AG04450 (cell line): ENCODE measurements at regions of chr20 and their contacts with region 1.

Region 1: GRCh38 chr20:19974626-19975435 is 42.3 kb upstream of the NAA20 start:
- DNase-seq: peak; percentile 92
- H3K4me3 ChIP-seq: peak overlapping the region; percentile 99
- H3K27ac ChIP-seq: peak overlapping the region; percentile 100
- H3K27me3 ChIP-seq: no peaks in the 10 kb centered on the region
- CTCF ChIP-seq: no peak

Region 2: DNA sequence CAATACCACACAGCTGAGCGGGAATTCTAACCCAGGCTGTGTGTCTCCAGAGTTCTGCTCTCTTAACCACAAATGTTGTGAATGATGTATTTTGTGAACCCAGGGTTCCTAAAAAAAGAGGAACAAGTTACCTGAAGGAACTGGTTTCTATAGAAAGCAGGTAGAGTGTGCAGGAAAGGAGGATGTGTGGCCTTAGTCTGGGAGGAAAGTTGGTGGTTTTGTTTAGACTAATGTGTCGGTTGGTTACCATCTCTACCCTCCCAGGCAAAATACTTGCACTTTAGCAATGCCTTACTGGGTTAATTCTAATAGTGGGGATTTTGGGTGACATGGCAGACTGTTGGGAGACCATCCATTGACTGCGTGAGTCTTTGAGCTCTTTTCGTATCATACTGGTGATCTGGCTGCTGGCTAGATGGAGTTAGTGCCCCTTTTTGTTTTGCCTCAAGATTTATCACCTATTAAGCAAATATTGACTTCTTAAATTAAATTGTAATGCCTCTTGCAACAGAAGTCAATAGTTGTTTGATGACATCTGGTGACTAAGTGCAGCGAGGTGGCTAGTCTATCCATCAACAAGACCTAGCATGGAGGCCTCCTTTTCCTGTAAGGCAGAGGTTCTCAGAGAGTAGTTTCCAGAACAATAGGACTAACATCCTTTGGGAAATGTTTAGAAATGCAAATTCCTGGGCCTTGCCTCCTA is 1017.8 kb before region 1 on chr20:
- CTCF ChIA-PET with region 1: no interaction called
- POLR2A ChIA-PET with region 1: no interaction called
- DNase-seq: no peak
- H3K4me3 ChIP-seq: no peak overlapping the region
- H3K27ac ChIP-seq: no peak overlapping the region
- H3K27me3 ChIP-seq: no peaks in the 10 kb centered on the region
- CTCF ChIP-seq: no peak

Region 3: GRCh38 chr20:19784511-19785172 is 190.2 kb before region 1 on chr20:
- CTCF ChIA-PET with region 1: interaction called, 11 read pairs
- POLR2A ChIA-PET with region 1: interaction called, 14 read pairs
- DNase-seq: peak; percentile 76
- H3K4me3 ChIP-seq: peak overlapping the region; percentile 34
- H3K27ac ChIP-seq: peak overlapping the region; percentile 93
- H3K27me3 ChIP-seq: no peaks in the 10 kb centered on the region
- CTCF ChIP-seq: peak; percentile 77

Region 4: DNA sequence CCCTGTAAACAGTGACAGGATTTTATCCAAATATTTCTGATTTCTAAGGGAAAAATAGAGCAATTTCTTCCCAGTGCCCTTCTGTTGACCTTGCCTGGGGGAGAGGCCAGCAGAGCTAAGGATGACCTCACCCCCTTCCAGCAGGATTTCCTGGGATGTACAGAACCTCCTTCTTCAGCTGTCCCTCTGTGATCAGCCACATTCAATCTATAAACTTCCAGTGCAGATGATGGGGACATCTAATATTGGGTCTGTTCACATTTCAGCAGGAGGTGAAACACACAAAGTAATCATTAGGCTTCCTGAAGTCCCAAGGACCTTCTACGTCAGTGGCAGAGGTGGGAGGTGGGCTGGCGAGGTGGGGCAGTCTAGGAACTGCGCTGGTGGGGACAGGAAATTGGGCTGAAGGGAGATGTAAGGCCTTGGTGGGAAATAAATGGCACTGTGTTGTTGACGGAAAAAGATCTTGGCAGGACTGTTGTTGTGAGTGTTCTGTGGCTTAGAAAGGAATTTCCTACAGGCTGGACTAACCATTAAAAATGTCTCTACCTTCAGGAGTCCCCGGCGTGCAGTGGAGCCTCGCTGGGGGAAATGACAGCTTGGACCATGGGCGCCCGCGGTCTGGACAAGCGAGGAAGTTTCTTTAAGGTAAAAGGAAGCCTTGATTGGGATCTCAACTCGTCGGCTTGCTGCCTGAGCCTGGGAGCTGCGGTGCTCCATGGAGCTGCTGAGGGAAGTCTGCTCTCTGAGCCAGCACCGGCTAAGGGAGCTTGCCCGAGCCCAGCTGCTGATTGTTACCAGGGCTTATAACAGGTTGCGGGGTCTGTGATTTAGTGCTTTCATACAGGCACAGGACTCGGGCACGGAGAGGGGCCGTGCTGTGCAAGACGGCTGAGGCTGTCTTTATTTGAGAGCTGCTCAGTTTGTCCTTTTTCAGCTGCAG is 85.5 kb before region 1 on chr20:
- CTCF ChIA-PET with region 1: no interaction called
- POLR2A ChIA-PET with region 1: interaction called, 20 read pairs
- DNase-seq: peak; percentile 29
- H3K4me3 ChIP-seq: peak overlapping the region; percentile 61
- H3K27ac ChIP-seq: peak overlapping the region; percentile 87
- H3K27me3 ChIP-seq: no peaks in the 10 kb centered on the region
- CTCF ChIP-seq: no peak

Region 5: DNA sequence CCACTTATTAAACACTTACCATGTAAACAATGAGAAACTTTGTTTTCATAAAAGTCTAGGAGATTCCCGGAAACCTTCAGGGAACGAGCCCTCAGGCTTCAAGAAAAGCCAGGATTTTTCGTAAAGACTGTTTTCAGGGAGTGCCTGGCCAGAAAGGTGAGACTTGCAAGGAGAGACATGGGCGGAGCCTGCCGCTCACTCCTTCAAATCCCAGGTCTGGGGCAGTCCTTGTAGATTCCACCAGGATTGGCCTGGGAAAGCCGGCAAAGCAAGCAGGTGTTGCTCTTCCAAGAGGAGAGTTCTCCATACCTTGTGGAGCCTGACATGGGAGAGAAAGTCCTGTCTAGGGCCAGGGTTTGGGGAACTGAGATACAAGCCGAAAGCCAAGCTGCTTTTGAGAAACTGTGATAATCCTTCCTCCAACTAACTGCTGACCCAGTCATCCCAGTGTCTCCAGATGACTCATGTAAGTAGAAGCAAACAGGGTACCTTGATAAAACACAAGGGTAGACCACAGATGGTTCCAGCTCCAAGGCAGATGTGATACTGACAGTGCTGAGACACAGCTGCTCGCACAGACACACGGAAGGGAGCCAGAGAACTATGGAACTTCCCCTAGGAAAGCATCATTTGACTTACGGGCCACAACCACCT is 27.1 kb before region 1 on chr20:
- CTCF ChIA-PET with region 1: no interaction called
- POLR2A ChIA-PET with region 1: interaction called, 18 read pairs
- DNase-seq: peak; percentile 86
- H3K4me3 ChIP-seq: 0 out of 2 replicates have a peak overlapping the region, but pooled peaks have one; percentile 8
- H3K27ac ChIP-seq: peak overlapping the region; percentile 80
- H3K27me3 ChIP-seq: no peaks in the 10 kb centered on the region
- CTCF ChIP-seq: no peak

Region 6: GRCh38 chr20:19986419-19986818 is 11.6 kb after region 1 on chr20:
- CTCF ChIA-PET with region 1: interaction called, 10 read pairs
- POLR2A ChIA-PET with region 1: interaction called, 88 read pairs
- DNase-seq: no peak
- H3K4me3 ChIP-seq: no peak overlapping the region
- H3K27ac ChIP-seq: no peak overlapping the region
- H3K27me3 ChIP-seq: no peaks in the 10 kb centered on the region
- CTCF ChIP-seq: no peak

Region 7: GRCh38 chr20:20017001-20017843 is 42.4 kb after region 1 on chr20 and contains the start of gene NAA20:
- CTCF ChIA-PET with region 1: interaction called, 10 read pairs
- POLR2A ChIA-PET with region 1: interaction called, 7 read pairs
- DNase-seq: peak; percentile 70
- H3K4me3 ChIP-seq: peak within 1 kb of the TSS; percentile 87
- H3K27ac ChIP-seq: peak within 1 kb of the TSS; percentile 21
- H3K27me3 ChIP-seq: no peaks in the 10 kb centered on the region
- CTCF ChIP-seq: peak; percentile 76
- polyA plus RNA-seq, gene NAA20: 59.6 and 85.1 TPM in 2 replicates